Naive thymus-derived CD4-positive, alpha-beta T cell (primary cell): ENCODE measurements at regions of chr3 and their contacts with region 1.

Region 1: DNA sequence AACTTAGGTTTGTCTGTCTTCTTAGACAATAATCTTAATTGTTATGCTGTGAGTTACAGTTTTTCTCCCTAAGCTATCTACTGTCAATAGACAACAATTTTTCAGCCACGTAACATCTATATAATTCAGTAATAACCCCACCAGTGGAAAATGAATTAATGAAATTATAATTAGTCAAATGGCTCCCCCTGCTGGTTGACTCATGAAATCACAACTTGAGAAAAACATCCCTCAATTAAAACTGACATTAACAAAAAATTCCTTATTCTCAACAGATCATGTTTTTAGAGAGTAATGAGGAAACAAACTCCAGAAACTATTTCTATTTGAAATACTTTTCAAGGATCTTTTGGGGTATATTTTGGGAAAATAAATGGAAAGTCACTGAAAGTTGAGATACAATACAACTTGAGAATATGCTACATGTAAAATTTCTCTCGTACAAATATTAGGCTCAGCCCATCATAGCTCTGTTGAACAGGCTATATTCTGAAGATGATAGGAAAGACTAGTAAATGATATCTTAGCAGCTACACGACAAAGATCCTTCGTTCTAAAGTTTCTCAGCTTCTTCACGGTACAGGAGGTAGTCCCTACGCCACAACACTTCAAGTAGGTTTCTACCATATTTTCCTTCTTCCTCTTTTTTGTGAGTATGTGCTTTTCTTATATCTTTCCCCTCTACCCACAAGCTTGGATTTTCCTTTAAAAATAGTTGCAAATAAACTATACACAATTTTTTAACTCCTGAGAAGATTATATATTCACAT is 20.7 kb downstream of the PPP1R2 start:
- DNase-seq: peak in 6 of 9 donors; percentile 19 to 56 (median 50)
- ATAC-seq: peak; percentile 64
- H3K4me3 ChIP-seq: no peak overlapping the region
- H3K4me3 Mint-ChIP-seq: peak overlapping the region in 4 of 10 donors; percentile 10 to 61 (median 35)
- H3K27ac ChIP-seq: peak overlapping the region; percentile 50
- H3K27ac Mint-ChIP-seq: peak overlapping the region in 8 of 9 donors; percentile 56 to 91 (median 82)
- H3K4me1 ChIP-seq: peaks cover 18 to 33% of the 10 kb centered on the region in 2 donors
- H3K4me1 Mint-ChIP-seq: peaks cover 18 to 64% (median 56%) of the 10 kb centered on the region in 7 donors
- H3K27me3 ChIP-seq: no peaks in the 10 kb centered on the region
- H3K27me3 Mint-ChIP-seq: no peaks in the 10 kb centered on the region

Region 2: GRCh38 chr3:195532834-195533233 is 10.4 kb after region 1 on chr3:
- CTCF ChIA-PET with region 1: interaction called, 6 read pairs
- POLR2A ChIA-PET with region 1: interaction called, 4 read pairs
- intact Hi-C with region 1: loop called (anchors 1 to 2 kb)
- DNase-seq: no peak
- ATAC-seq: no peak
- H3K4me3 ChIP-seq: no peak overlapping the region
- H3K4me3 Mint-ChIP-seq: peak overlapping the region in 9 of 10 donors; percentile 10 to 98 (median 68)
- H3K27ac ChIP-seq: peak overlapping the region; percentile 56
- H3K27ac Mint-ChIP-seq: peak overlapping the region in 8 of 9 donors; percentile 21 to 91 (median 62)
- H3K4me1 ChIP-seq: peaks cover 53 to 60% of the 10 kb centered on the region in 2 donors
- H3K4me1 Mint-ChIP-seq: peaks cover 44 to 98% (median 90%) of the 10 kb centered on the region in 7 donors
- H3K27me3 ChIP-seq: no peaks in the 10 kb centered on the region
- H3K27me3 Mint-ChIP-seq: no peaks in the 10 kb centered on the region

Region 3: GRCh38 chr3:195549931-195550519 is 27.6 kb after region 1 on chr3:
- CTCF ChIA-PET with region 1: interaction called, 13 read pairs
- POLR2A ChIA-PET with region 1: interaction called, 28 read pairs
- intact Hi-C with region 1: no loop called
- DNase-seq: peak; percentile 45 to 95 (median 94)
- ATAC-seq: peak; percentile 89
- H3K4me3 ChIP-seq: peak overlapping the region; percentile 43
- H3K4me3 Mint-ChIP-seq: peak overlapping the region; percentile 73 to 98 (median 90)
- H3K27ac ChIP-seq: peak overlapping the region; percentile 69
- H3K27ac Mint-ChIP-seq: peak overlapping the region; percentile 91 to 100 (median 99)
- H3K4me1 ChIP-seq: peaks cover 70 to 72% of the 10 kb centered on the region in 2 donors
- H3K4me1 Mint-ChIP-seq: peaks cover 44 to 93% (median 86%) of the 10 kb centered on the region in 7 donors
- H3K27me3 ChIP-seq: no peaks in the 10 kb centered on the region
- H3K27me3 Mint-ChIP-seq: no peaks in the 10 kb centered on the region

Region 4: DNA sequence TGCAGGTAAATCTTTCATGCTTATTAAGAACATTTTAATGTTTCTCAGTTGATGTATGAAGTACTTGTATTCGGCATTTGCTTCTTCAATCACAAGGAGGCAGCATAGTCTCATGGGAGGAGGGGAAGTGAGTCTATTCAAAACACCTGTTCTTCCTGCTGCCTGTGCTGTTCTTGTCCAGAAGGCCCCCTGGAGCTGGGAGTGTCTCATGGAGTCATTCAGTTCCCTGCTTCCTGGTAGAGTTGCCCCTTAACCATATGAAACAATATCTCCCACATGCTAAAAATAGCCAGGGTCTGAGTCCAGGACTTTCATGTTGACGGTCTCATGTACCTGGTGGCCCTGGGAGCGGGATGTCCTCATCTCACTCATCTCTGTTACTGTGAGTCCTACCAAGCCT is 36.2 kb after region 1 on chr3:
- CTCF ChIA-PET with region 1: interaction called, 13 read pairs
- POLR2A ChIA-PET with region 1: interaction called, 4 read pairs
- intact Hi-C with region 1: loop called in 1 of 2 experiments (anchors 1 kb)
- DNase-seq: peak in 7 of 9 donors; percentile 56 to 75 (median 67)
- ATAC-seq: peak; percentile 72
- H3K4me3 ChIP-seq: no peak overlapping the region
- H3K4me3 Mint-ChIP-seq: peak overlapping the region in 1 of 10 donors; percentile 33
- H3K27ac ChIP-seq: no peak overlapping the region
- H3K27ac Mint-ChIP-seq: peak overlapping the region in 8 of 9 donors; percentile 46 to 83 (median 68)
- H3K4me1 ChIP-seq: peaks cover 0 to 37% of the 10 kb centered on the region in 2 donors
- H3K4me1 Mint-ChIP-seq: peaks cover 20 to 45% (median 38%) of the 10 kb centered on the region in 7 donors
- H3K27me3 ChIP-seq: no peaks in the 10 kb centered on the region
- H3K27me3 Mint-ChIP-seq: no peaks in the 10 kb centered on the region